ENCODE measurements at regions of chr5 and their contacts with region 1.

Region 1: GRCh38 chr5:122845229-122846050 is at the start of gene SNX24:
- DNase-seq: peak; percentile 83 to 93 (median 87)
- ATAC-seq: peak; percentile 80 to 95 (median 92)
- H3K4me3 ChIP-seq: peak within 1 kb of the TSS; percentile 74 to 98 (median 92)
- H3K27ac ChIP-seq: peak within 1 kb of the TSS; percentile 58 to 93 (median 88)
- H3K4me1 ChIP-seq: peaks cover 0 to 50% (median 15%) of the 10 kb centered on the region in 12 donors
- H3K27me3 ChIP-seq: no peaks in the 10 kb centered on the region
- CTCF ChIP-seq: peak in 1 of 12 donors; percentile 13
- POLR2A ChIP-seq: peak in 1 of 2 donors; percentile 58
- total RNA-seq, gene SNX24: 10.0 to 21.2 (median 15.1) TPM

Region 2: DNA sequence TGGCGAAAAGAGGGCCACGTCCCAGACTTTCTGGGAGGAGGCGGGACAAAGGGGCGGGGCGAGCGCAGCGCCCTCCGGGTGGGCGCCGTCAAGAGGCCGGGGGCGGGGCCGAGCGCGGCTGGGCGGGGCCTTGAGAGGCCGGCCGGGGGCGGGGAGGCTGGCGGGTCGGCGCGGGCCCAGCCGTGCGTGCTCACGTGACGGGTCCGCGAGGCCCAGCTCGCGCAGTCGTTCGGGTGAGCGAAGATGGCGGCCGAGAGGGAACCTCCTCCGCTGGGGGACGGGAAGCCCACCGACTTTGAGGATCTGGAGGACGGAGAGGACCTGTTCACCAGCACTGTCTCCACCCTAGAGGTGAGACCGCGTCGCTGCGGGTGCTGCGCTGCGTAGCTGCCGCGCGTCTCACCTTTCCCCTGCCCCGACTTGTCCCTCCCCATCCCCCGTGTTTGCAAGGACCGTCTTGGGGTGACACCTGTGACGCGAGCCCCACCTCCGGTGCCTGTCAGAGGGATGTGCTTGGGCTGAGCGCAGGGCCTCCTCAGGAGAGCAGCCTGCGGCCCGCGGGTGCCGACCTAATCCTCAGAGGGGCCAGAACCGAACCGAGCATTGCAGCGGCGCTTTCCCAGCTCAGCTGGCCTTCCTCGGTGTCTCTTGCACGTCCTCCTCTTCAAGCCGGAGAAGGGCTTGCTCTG is 70.4 kb before region 1 on chr5 and contains the start of gene SNX2:
- intact Hi-C with region 1: loop called in 6 of 10 experiments (anchors 2 to 10 kb)
- DNase-seq: peak; percentile 95 to 98 (median 95)
- ATAC-seq: peak; percentile 92 to 100 (median 98)
- H3K4me3 ChIP-seq: peak within 1 kb of the TSS; percentile 71 to 97 (median 87)
- H3K27ac ChIP-seq: peak within 1 kb of the TSS; percentile 33 to 94 (median 83)
- H3K4me1 ChIP-seq: peaks cover 4 to 60% (median 17%) of the 10 kb centered on the region in 12 donors
- H3K27me3 ChIP-seq: no peaks in the 10 kb centered on the region
- CTCF ChIP-seq: peak in 6 of 12 donors; percentile 4 to 34 (median 18)
- POLR2A ChIP-seq: peak in 1 of 2 donors; percentile 83
- total RNA-seq, gene SNX2: 21.5 to 67.3 (median 35.7) TPM

Measured in heart left ventricle (tissue), 16 donors.